ENCODE measurements at regions of chr7 and their contacts with region 1.

Region 1: DNA sequence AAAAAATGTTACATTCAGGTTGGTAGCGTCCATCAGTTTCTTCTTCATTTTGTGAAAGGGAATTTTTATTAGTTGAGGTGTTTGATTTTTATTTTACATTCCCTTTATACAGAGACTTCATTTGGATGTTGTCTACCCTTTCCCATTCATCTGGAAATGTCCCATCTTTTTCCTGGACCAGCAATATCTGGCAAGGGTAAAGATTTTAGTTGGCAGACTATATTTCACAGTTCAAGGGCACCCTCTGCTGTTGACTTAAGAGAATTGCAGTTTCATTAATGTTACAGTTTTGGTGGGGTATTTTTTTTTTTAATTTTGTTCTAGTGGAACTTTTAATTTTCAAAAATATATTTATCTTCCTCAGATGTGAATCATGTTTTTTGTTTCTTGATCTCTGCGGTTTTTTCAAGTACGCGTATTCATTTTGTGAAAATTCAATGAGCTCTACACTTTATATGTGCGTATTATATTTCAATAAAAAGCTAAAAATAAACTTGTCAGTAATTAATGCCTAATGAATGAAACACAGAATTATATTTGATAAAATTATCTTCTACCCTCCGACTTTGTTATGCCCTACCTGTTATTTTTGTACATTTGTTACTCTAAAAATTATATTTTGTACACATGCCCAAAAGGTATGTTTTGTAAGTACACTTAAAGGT is 97.9 kb upstream of the KLF14 start:
- DNase-seq: no peak
- H3K4me3 ChIP-seq: no peak overlapping the region
- CTCF ChIP-seq: peak; percentile 23

Region 2: DNA sequence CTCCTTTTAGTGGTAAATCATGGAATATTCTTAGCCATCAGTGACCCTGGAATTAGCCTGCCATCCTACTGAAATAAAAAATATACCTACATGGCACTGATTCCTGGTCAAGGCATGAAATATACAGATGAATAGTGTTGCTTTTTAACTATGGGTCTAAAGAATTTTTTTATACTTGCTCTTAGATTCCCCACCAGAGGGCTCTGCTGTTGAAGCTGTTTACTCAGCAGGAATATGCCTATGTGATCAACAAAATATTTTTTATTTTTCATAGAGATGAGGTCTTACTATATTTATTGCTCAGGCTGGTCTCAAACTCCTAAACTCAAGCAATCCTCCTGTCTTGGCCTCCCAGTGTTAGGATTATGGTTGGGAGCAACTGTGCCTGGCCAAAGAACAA is 794.2 kb before region 1 on chr7:
- CTCF ChIA-PET with region 1: interaction called, 11 read pairs
- POLR2A ChIA-PET with region 1: no interaction called
- DNase-seq: no peak
- H3K4me3 ChIP-seq: no peak overlapping the region
- CTCF ChIP-seq: peak; percentile 2

Region 3: DNA sequence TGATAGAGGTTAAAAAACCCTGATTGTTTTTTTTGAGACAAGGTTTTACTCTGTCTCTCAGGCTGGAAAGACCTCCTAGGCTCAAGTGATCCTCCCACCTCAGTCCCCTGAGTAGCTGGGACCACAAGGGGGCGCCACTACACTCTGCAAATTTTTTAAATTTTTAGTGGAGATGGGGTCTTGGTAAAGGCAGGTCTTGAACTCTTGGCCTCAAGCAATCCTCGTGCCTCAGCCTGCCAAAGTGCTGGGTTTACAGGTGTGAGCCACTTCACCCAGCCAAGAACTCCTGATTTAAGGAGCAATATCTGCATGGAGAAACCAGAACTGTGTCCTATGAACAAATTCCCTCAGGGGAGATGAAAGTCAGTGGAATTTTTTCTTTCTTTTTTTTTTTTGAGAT is 768.9 kb before region 1 on chr7:
- CTCF ChIA-PET with region 1: interaction called, 17 read pairs
- POLR2A ChIA-PET with region 1: no interaction called
- DNase-seq: no peak
- H3K4me3 ChIP-seq: no peak overlapping the region
- CTCF ChIP-seq: peak; percentile 71

Region 4: GRCh38 chr7:130793855-130794618 is 37.9 kb before region 1 on chr7:
- CTCF ChIA-PET with region 1: interaction called, 10 read pairs
- POLR2A ChIA-PET with region 1: no interaction called
- DNase-seq: no peak
- H3K4me3 ChIP-seq: no peak overlapping the region
- CTCF ChIP-seq: peak; percentile 10

Region 5: DNA sequence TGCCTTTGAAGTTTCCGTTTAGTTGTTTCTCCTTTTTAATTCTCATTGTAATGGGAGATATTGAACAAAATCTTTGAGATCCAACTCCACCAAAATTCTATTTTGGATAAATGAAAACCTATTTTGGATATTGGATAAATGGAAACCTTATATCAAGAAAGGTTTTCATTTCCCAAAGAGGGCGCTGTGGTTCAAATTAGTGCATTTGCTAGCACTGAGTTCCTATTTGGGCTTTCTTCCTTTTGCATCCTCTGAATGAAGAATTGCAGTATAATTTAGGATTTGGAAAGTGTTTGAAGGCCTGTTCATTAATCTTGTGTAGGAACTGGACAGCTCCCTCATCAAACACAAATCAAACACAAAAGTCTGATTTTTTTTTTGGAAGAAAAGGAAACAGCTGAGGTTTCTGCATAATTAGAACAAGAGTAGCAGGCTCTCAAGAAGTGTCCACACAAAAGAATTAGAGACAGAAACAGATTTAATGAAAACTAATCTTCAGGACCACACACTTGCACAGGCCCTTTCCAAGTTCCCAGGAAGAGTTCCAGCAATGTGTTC is 17.1 kb before region 1 on chr7:
- CTCF ChIA-PET with region 1: interaction called, 24 read pairs
- POLR2A ChIA-PET with region 1: no interaction called
- DNase-seq: no peak
- H3K4me3 ChIP-seq: no peak overlapping the region
- CTCF ChIP-seq: peak; percentile 22